Ascending aorta (tissue), 2 donors: ENCODE measurements at regions of chr2 and their contacts with region 1.

Region 1: DNA sequence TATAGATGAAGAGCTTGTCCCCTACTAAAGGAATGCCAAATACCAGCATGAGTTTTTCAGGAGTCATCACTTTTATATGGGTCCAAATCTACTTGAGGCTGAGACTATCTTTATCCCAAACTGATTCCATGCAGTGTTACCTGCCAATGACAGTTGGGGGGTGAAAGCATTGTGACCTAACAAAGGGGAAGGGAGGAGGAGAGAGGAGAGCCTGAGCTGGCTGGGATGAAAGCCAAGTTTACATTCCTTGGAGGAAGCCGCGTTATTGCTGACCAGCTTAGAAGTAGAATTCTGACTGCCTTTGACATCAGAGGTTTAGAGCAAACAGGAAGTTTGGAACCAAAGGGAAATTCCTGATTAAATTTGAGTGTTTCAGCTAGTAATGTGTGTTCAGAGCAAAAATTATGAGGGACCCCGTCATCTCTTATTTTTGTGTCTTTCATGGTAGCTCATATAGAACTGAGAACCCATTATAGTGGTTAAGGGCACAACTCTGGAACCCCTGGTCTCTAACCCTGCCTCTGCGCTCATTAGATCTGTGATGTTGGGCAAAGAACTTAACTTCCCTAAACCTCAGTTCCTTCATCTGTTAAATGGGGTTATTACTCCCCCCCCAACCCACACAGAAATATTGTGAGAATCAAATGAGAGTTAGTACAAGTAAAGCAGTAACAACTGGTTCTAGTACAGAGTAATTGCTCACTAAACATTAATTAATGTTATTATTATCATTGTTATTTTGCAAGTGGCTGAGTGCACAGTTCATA is 199.3 kb upstream of the EPAS1 start:
- DNase-seq: peak; percentile 23 to 85
- H3K4me3 ChIP-seq: no peak overlapping the region
- H3K27ac ChIP-seq: peak overlapping the region; percentile 60 to 71
- H3K4me1 ChIP-seq: peaks cover 0 to 14% of the 10 kb centered on the region in 2 donors
- H3K27me3 ChIP-seq: no peaks in the 10 kb centered on the region
- CTCF ChIP-seq: no peak

Region 2: GRCh38 chr2:45650851-45651414 is 447.0 kb before region 1 on chr2:
- intact Hi-C with region 1: no loop called
- DNase-seq: peak; percentile 86 to 98
- H3K4me3 ChIP-seq: peak overlapping the region; percentile 79 to 92
- H3K27ac ChIP-seq: peak overlapping the region; percentile 95 to 96
- H3K4me1 ChIP-seq: peaks cover 2 to 10% of the 10 kb centered on the region in 2 donors
- H3K27me3 ChIP-seq: no peaks in the 10 kb centered on the region
- CTCF ChIP-seq: peak; percentile 21 to 64 (median 47)

Region 3: GRCh38 chr2:46134531-46135181 is 36.8 kb after region 1 on chr2:
- intact Hi-C with region 1: loop called (anchors 5 kb)
- DNase-seq: peak in 1 of 2 donors; percentile 76
- H3K4me3 ChIP-seq: no peak overlapping the region
- H3K27ac ChIP-seq: peak overlapping the region; percentile 82 to 89
- H3K4me1 ChIP-seq: peaks cover 9 to 55% of the 10 kb centered on the region in 2 donors
- H3K27me3 ChIP-seq: no peaks in the 10 kb centered on the region
- CTCF ChIP-seq: no peak

Region 4: DNA sequence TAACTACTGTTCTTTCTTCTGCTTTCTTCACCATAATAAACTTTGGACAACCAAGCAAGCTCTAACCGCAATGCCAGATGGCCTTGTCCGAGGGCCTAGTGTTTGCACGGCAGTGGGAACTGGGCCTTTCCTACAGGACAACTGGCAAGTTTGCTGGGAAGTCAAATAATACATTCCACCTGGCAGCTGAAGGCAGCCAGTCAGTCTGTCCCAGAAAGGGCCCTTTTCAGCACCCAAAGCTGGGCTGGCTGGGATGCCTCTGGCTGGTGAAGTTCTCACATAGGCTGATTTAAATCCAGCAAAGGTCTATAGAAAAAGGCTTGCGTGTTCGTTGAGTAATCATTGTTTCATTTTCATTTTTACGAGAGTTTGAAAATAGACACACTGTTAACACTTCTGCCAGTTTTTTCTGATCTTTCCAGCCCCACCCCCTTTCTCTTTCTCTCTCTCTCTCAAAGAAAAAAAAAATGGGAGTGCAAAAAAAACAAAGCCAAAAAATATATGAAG is 89.3 kb after region 1 on chr2:
- intact Hi-C with region 1: loop called (anchors 5 kb)
- DNase-seq: no peak
- H3K4me3 ChIP-seq: peak overlapping the region in 1 of 2 donors; percentile 36
- H3K27ac ChIP-seq: peak overlapping the region; percentile 55 to 64
- H3K4me1 ChIP-seq: peaks cover 6 to 17% of the 10 kb centered on the region in 2 donors
- H3K27me3 ChIP-seq: no peaks in the 10 kb centered on the region
- CTCF ChIP-seq: no peak

Region 5: DNA sequence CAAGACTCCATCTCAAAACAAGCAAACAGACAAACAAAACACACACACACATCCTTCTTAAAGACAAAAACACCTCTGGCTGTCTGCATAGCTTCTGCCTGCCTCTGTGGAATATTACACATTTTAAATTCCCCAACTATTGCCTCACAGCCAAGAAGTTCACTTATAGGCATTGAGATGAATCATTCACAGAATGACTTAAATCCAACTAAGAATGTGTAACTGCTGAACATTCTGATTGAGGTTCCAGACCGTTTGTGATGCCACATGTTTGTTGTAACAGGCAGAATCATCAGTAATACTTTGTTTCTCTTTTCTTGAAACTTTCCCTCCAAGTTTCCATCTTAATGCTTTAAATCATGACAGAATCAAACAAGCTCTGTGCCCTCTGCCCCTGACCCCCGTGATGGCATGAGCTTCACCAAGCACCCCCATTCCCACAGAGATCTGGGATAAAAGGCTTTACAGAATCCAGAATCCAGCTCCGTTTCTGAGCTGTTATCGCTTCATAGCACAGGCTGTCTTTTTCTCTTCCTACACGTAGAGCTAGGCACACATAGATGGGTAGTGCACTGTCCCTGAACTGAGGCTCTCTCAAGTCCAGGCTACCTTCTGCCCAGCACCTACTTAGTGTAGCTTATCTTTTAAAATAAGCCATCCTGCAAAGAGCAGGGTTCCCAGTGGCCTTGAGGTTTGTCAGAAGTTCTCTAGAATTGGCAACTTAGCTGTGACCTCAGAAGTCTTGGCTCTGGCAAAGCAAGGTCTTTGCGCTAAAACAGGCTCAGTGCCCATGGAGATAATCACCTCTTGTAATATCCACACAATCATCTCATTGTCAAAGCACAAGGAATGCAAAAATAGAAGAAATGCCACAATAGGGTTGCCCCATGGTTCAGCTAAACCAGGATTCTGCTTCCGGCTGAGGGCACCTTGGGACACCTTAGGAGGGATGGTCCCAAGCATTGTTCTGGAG is 232.2 kb after region 1 on chr2:
- intact Hi-C with region 1: no loop called
- DNase-seq: no peak
- H3K4me3 ChIP-seq: no peak overlapping the region
- H3K27ac ChIP-seq: peak overlapping the region; percentile 86 to 92
- H3K4me1 ChIP-seq: peaks cover 16 to 76% of the 10 kb centered on the region in 2 donors
- H3K27me3 ChIP-seq: no peaks in the 10 kb centered on the region
- CTCF ChIP-seq: no peak

Region 6: GRCh38 chr2:46364797-46365457 is 267.0 kb after region 1 on chr2:
- intact Hi-C with region 1: no loop called
- DNase-seq: no peak
- H3K4me3 ChIP-seq: no peak overlapping the region
- H3K27ac ChIP-seq: no peak overlapping the region
- H3K4me1 ChIP-seq: peaks cover 0 to 8% of the 10 kb centered on the region in 2 donors
- H3K27me3 ChIP-seq: no peaks in the 10 kb centered on the region
- CTCF ChIP-seq: peak; percentile 68 to 86 (median 78)